WTC11 (cell line): ENCODE measurements at regions of chr17 and their contacts with region 1.

Region 1: GRCh38 chr17:64025732-64026294 is 5.4 kb upstream of the ICAM2 start:
- DNase-seq: peak; percentile 92
- ATAC-seq: peak; percentile 97
- H3K4me3 Mint-ChIP-seq: peak overlapping the region; percentile 48
- H3K27ac Mint-ChIP-seq: no peak overlapping the region
- H3K4me1 Mint-ChIP-seq: peaks cover 3% of the 10 kb centered on the region; the same call in 1 of the 2 replicates
- H3K27me3 Mint-ChIP-seq: peaks cover 13% of the 10 kb centered on the region
- CTCF ChIP-seq: peak; percentile 96

Region 2: GRCh38 chr17:63911657-63912426 is 114.0 kb before region 1 on chr17:
- CTCF ChIA-PET with region 1: interaction called, 34 read pairs
- POLR2A ChIA-PET with region 1: no interaction called
- DNase-seq: peak; percentile 77
- ATAC-seq: peak; percentile 71
- H3K4me3 Mint-ChIP-seq: no peak overlapping the region
- H3K27ac Mint-ChIP-seq: no peak overlapping the region
- H3K4me1 Mint-ChIP-seq: peaks cover 17% of the 10 kb centered on the region
- H3K27me3 Mint-ChIP-seq: peaks cover 4% of the 10 kb centered on the region; the same call in 1 of the 2 replicates
- CTCF ChIP-seq: peak; percentile 96

Region 3: DNA sequence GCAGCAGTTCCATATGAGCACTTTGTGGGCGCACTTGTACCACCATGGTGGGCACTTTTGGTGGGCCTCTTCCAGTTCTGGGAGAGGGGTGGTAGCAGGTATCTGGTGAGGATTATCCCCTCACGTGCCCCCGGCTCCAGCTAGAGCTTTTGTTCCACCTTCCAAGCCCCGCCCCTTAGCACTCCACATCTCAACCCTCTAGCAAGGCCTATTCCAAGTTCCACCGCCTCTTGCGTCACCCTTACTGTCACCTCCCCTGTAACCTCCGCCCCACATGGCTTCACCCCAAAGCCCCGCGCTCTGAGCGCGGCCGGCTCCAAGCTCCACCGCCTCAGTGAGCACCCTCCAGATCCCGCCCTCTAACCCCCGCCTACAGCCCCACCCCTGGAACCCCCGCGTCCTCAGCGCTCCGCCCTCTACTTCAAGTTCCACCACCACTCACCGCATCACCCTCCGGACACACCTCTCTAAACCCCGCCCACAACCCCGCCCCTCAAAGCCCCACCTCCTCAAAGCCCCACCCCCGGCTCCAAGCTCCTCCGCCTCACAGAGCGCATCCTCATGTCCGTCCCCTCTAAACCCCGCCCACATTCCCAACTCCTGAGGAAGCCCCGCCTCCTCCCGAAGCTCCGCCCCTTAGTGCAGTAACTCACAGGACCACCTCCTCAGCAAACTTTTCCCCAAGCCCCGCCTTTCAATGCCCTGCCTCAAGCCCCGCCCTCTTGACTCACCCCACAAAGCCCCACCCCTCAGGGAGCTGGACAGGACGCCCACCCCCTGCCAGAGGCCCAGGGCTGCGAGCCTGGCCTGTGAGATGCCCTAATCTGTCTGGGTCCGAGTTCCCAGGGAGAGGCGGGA is 64.2 kb before region 1 on chr17:
- CTCF ChIA-PET with region 1: interaction called, 18 read pairs
- POLR2A ChIA-PET with region 1: interaction called, 4 read pairs
- DNase-seq: peak; percentile 100
- ATAC-seq: peak; percentile 90
- H3K4me3 Mint-ChIP-seq: peak overlapping the region; percentile 76
- H3K27ac Mint-ChIP-seq: 0 out of 2 replicates have a peak overlapping the region, but pooled peaks have one; percentile 70
- H3K4me1 Mint-ChIP-seq: peaks cover 20% of the 10 kb centered on the region
- H3K27me3 Mint-ChIP-seq: no peaks in the 10 kb centered on the region; the same call in 1 of the 2 replicates
- CTCF ChIP-seq: no peak

Region 4: GRCh38 chr17:64005734-64006167 is 20.1 kb before region 1 on chr17:
- CTCF ChIA-PET with region 1: interaction called, 11 read pairs
- POLR2A ChIA-PET with region 1: no interaction called
- DNase-seq: no peak
- ATAC-seq: no peak; the same call in 1 of the 2 replicates
- H3K4me3 Mint-ChIP-seq: no peak overlapping the region
- H3K27ac Mint-ChIP-seq: no peak overlapping the region
- H3K4me1 Mint-ChIP-seq: peaks cover 18% of the 10 kb centered on the region
- H3K27me3 Mint-ChIP-seq: no peaks in the 10 kb centered on the region; the same call in 1 of the 2 replicates
- CTCF ChIP-seq: no peak

Region 5: DNA sequence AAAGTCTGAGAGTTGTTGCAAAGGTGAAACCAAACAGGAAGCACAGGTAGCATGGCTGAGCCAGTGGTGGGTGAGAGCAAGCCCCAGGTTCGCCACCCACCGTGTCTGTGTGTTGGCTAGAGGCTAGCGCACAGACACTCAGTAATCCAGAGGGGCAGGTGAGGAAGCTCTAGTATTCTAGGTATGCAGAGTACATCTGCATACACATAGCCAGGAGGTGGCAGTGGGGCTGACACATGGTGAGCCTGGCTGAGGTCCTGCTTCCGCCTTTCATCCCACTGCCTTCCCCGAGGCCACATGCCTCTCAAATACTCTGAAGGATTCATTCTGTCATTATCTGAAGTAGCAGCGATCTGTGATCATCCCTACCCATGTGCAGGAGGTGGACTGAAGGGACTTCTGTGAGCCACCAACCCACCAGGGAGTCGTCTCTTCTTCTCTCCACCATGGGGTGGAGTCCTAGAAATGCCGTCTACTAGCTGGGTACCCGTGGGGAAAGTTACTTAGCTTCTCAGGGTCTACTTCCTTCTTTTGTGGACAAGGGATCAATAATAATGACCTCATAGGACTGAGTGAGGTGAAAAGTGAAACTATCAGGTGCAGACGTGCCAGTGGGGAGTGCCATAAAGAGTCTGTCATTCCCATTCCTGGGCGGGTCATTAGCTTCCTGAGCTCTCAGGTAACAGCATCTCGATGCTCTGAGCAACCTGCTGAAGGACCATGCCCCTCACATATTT is 30.6 kb after region 1 on chr17:
- CTCF ChIA-PET with region 1: interaction called, 24 read pairs
- POLR2A ChIA-PET with region 1: no interaction called
- DNase-seq: peak; percentile 63
- ATAC-seq: peak; percentile 99
- H3K4me3 Mint-ChIP-seq: no peak overlapping the region
- H3K27ac Mint-ChIP-seq: peak overlapping the region; percentile 69; the same call in 1 of the 2 replicates
- H3K4me1 Mint-ChIP-seq: peaks cover 21% of the 10 kb centered on the region
- H3K27me3 Mint-ChIP-seq: no peaks in the 10 kb centered on the region
- CTCF ChIP-seq: no peak

Region 6: DNA sequence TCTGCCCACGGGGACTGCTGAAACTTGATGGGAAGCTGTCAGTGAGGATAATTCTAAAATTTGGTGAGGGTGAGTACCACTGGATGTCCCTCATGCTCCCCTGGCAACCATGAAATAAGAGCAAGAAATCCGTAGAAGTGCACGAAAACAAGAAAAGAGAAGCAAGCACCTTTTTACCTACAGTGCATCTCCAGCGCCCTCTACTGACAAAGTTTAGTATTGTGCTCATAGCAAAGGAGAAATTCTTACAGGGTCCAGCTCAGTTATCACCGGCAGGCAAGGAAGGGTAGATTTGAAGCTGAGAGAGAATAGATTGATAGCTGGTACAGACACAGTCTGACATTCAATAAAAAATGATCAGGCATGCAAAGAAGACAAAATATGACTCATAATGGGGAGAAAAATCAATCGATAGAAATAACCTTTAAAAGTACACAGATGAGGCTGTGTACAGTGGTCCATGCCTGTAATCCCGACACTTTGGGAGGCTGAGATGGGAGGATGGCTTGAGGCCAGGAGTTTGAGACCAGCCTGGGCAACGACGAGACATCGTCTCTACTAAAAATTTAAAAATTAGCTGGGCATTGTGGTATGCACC is 265.5 kb after region 1 on chr17:
- CTCF ChIA-PET with region 1: interaction called, 10 read pairs
- POLR2A ChIA-PET with region 1: no interaction called
- DNase-seq: no peak
- ATAC-seq: peak; percentile 39; the same call in 1 of the 2 replicates
- H3K4me3 Mint-ChIP-seq: no peak overlapping the region
- H3K27ac Mint-ChIP-seq: no peak overlapping the region
- H3K4me1 Mint-ChIP-seq: no peaks in the 10 kb centered on the region
- H3K27me3 Mint-ChIP-seq: no peaks in the 10 kb centered on the region
- CTCF ChIP-seq: peak; percentile 49